IMR-90 (cell line): ENCODE measurements at regions of chr22 and their contacts with region 1.

Region 1: GRCh38 chr22:27348634-27349033 is 452.9 kb downstream of the MN1 start:
- DNase-seq: peak; percentile 43
- ATAC-seq: no peak
- H3K4me3 ChIP-seq: no peak overlapping the region
- H3K27ac ChIP-seq: no peak overlapping the region
- H3K4me1 ChIP-seq: no peaks in the 10 kb centered on the region
- H3K27me3 ChIP-seq: peaks cover 18% of the 10 kb centered on the region
- CTCF ChIP-seq: no peak
- POLR2A ChIP-seq: no peak
- RAD21 ChIP-seq: no peak

Region 2: GRCh38 chr22:27004434-27004833 is 344.2 kb before region 1 on chr22:
- CTCF ChIA-PET with region 1: no interaction called
- POLR2A ChIA-PET with region 1: no interaction called
- dilution Hi-C with region 1: no loop called
- in situ Hi-C with region 1: no loop called
- intact Hi-C with region 1: loop called (anchors 10 kb)
- DNase-seq: no peak
- ATAC-seq: no peak
- H3K4me3 ChIP-seq: no peak overlapping the region
- H3K27ac ChIP-seq: no peak overlapping the region
- H3K4me1 ChIP-seq: no peaks in the 10 kb centered on the region
- H3K27me3 ChIP-seq: peaks cover 6% of the 10 kb centered on the region
- CTCF ChIP-seq: no peak
- POLR2A ChIP-seq: no peak
- RAD21 ChIP-seq: no peak

Region 3: GRCh38 chr22:27740192-27740748 is 391.6 kb after region 1 on chr22:
- CTCF ChIA-PET with region 1: no interaction called
- POLR2A ChIA-PET with region 1: no interaction called
- dilution Hi-C with region 1: no loop called
- in situ Hi-C with region 1: no loop called
- intact Hi-C with region 1: no loop called
- DNase-seq: no peak
- ATAC-seq: no peak
- H3K4me3 ChIP-seq: no peak overlapping the region
- H3K27ac ChIP-seq: no peak overlapping the region
- H3K4me1 ChIP-seq: no peaks in the 10 kb centered on the region
- H3K27me3 ChIP-seq: peaks cover 11% of the 10 kb centered on the region
- CTCF ChIP-seq: no peak
- POLR2A ChIP-seq: no peak
- RAD21 ChIP-seq: no peak

Region 4: DNA sequence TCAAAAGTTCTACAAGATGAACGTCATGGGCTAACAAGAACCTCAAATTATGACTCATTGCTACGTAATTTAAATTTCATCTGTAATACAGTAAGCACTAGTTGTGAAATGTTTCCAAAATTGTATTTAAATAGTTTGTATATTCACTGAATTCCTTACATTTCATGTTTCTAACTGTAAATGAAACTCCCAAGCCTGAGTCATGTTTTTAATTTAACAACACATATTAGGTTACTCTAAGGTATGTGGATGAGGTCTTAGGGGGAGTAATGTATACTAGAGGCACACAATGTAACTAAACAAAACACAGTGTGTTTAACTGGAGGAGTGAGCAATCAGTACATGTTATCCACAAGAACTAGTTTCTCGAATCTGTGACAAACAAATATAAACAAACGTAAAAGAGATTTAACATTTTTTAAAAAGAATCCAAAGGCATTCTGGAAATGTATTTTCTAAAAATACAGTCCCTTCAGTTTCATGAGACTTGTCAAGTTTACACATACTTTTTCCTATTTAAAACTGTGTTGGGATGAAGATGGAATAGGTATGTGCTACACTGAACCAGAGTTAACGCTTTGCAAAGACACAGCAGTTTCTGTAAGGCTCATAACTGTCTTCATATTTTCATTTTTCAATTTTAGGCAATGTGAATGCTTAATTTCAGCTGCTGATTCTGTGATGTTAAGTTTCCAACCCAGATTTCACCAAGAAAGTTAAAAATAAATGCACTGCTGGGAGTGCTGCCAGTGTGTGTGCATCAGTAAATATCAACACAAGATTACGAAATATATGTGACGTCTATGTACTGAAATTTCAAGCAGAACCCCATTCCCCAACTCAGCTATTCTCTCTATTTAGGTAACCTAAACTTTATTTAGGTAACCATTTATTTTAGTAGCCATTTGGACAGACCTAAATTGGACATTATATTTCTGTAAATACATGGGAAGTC is 517.8 kb after region 1 on chr22:
- CTCF ChIA-PET with region 1: no interaction called
- POLR2A ChIA-PET with region 1: no interaction called
- dilution Hi-C with region 1: no loop called
- in situ Hi-C with region 1: no loop called
- intact Hi-C with region 1: no loop called
- DNase-seq: peak; percentile 99
- ATAC-seq: peak; percentile 88
- H3K4me3 ChIP-seq: no peak overlapping the region
- H3K27ac ChIP-seq: peak overlapping the region; percentile 100; the same call in 1 of the 2 replicates
- H3K4me1 ChIP-seq: peaks cover 36% of the 10 kb centered on the region
- H3K27me3 ChIP-seq: no peaks in the 10 kb centered on the region
- CTCF ChIP-seq: no peak
- POLR2A ChIP-seq: no peak
- RAD21 ChIP-seq: no peak